Vagina (tissue), 2 donors: ENCODE measurements at regions of chr2 and their contacts with region 1.

Region 1: DNA sequence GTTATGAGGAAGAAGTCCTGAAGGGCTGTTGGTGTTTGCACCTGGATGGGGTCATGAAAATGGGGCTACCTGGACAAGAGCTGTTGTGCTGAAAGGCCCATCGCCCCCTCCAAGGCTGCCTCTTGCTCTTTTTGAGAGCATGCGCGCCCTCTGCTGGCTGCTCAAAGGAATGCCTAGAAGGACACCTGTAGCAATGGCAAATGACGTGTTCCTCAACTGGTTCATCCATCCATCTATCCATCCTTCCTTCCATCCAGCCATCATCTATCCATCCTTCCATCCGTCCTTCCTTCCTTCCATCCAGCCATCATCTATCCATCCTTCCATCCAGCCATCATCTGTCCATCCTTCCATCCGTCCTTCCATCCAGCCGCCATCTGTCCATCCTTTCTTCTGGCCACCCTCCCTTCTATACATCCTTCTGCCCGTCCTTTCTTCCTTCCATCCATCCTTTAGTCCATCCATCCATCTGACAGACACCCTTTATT is 17.2 kb upstream of the RPL31 start:
- DNase-seq: no peak
- H3K4me3 ChIP-seq: no peak overlapping the region
- H3K27ac ChIP-seq: no peak overlapping the region
- H3K4me1 ChIP-seq: no peaks in the 10 kb centered on the region
- H3K27me3 ChIP-seq: no peaks in the 10 kb centered on the region
- CTCF ChIP-seq: peak; percentile 85 to 95 (median 94)
- POLR2A ChIP-seq: no peak

Region 2: GRCh38 chr2:100571670-100572069 is 413.3 kb before region 1 on chr2:
- intact Hi-C with region 1: no loop called
- DNase-seq: no peak
- H3K4me3 ChIP-seq: no peak overlapping the region
- H3K27ac ChIP-seq: no peak overlapping the region
- H3K4me1 ChIP-seq: no peaks in the 10 kb centered on the region
- H3K27me3 ChIP-seq: no peaks in the 10 kb centered on the region
- CTCF ChIP-seq: no peak
- POLR2A ChIP-seq: no peak

Region 3: GRCh38 chr2:100603948-100604633 is 380.8 kb before region 1 on chr2:
- intact Hi-C with region 1: loop called (anchors 5 kb)
- DNase-seq: no peak
- H3K4me3 ChIP-seq: no peak overlapping the region
- H3K27ac ChIP-seq: no peak overlapping the region
- H3K4me1 ChIP-seq: no peaks in the 10 kb centered on the region
- H3K27me3 ChIP-seq: no peaks in the 10 kb centered on the region
- CTCF ChIP-seq: no peak
- POLR2A ChIP-seq: no peak

Region 4: GRCh38 chr2:100610381-100610831 is 374.5 kb before region 1 on chr2:
- intact Hi-C with region 1: loop called (anchors 5 kb)
- DNase-seq: no peak
- H3K4me3 ChIP-seq: no peak overlapping the region
- H3K27ac ChIP-seq: no peak overlapping the region
- H3K4me1 ChIP-seq: no peaks in the 10 kb centered on the region
- H3K27me3 ChIP-seq: no peaks in the 10 kb centered on the region
- CTCF ChIP-seq: peak; percentile 33 to 58 (median 55)
- POLR2A ChIP-seq: no peak

Region 5: GRCh38 chr2:100730346-100730745 is 254.6 kb before region 1 on chr2:
- intact Hi-C with region 1: loop called (anchors 10 kb)
- DNase-seq: no peak
- H3K4me3 ChIP-seq: no peak overlapping the region
- H3K27ac ChIP-seq: no peak overlapping the region
- H3K4me1 ChIP-seq: no peaks in the 10 kb centered on the region
- H3K27me3 ChIP-seq: no peaks in the 10 kb centered on the region
- CTCF ChIP-seq: peak in 1 of 3 experiments; percentile 54
- POLR2A ChIP-seq: no peak

Region 6: DNA sequence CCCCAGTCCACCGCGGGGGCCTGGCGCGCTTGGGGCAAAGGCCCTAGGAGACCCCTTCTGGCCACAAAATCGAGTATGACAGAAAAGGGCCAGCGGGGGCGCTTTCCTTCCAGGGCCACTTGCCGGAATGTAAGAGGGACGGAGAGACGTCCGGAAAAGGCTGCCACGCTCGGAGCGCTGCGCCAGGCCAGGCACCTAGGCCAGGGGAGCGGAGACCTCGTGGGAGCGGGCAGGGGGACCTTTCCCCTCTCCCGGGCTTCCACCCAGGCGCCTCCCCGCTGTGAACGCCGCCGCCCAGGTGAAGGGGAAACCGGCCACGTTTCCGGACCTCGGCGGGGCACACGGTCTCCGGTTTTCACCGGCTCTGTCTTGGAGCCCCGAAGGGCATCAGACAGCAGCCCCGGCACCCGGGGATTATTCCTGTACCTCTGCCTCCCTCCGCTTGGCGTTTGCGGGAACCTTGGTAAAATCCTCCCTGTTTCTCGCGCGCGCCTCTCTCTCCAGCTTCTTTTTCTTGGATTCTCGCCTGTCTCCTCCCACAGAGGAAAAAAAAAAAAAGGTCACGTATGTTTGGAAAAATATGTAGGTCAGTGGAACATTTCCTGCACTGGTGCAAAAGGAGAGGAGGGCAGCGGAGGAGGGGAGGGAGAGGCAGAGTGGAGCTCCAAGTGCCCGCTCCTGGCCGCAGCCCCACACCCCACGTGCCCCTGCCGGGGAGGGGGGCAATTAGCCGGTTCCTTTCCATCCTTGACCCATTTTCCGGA is 166.1 kb before region 1 on chr2:
- intact Hi-C with region 1: loop called (anchors 10 kb)
- DNase-seq: no peak
- H3K4me3 ChIP-seq: peak overlapping the region; percentile 59 to 84
- H3K27ac ChIP-seq: peak overlapping the region; percentile 88
- H3K4me1 ChIP-seq: peaks cover 35% of the 10 kb centered on the region
- H3K27me3 ChIP-seq: no peaks in the 10 kb centered on the region
- CTCF ChIP-seq: no peak
- POLR2A ChIP-seq: no peak

Region 7: GRCh38 chr2:100909534-100910081 is 75.3 kb before region 1 on chr2:
- intact Hi-C with region 1: no loop called
- DNase-seq: peak in 1 of 2 donors; percentile 34
- H3K4me3 ChIP-seq: no peak overlapping the region
- H3K27ac ChIP-seq: no peak overlapping the region
- H3K4me1 ChIP-seq: no peaks in the 10 kb centered on the region
- H3K27me3 ChIP-seq: no peaks in the 10 kb centered on the region
- CTCF ChIP-seq: no peak
- POLR2A ChIP-seq: no peak